Activated CD4-positive, alpha-beta memory T cell treated with anti-CD3 and anti-CD28 coated beads for 36 hours (primary cell): ENCODE measurements at regions of chr3 and their contacts with region 1.

Region 1: GRCh38 chr3:141303481-141304223 is 64.7 kb upstream of the ZBTB38 start:
- DNase-seq: peak; percentile 56
- H3K4me3 Mint-ChIP-seq: no peak overlapping the region
- H3K27ac Mint-ChIP-seq: no peak overlapping the region
- H3K4me1 Mint-ChIP-seq: peaks cover 44% of the 10 kb centered on the region
- H3K27me3 Mint-ChIP-seq: no peaks in the 10 kb centered on the region

Region 2: DNA sequence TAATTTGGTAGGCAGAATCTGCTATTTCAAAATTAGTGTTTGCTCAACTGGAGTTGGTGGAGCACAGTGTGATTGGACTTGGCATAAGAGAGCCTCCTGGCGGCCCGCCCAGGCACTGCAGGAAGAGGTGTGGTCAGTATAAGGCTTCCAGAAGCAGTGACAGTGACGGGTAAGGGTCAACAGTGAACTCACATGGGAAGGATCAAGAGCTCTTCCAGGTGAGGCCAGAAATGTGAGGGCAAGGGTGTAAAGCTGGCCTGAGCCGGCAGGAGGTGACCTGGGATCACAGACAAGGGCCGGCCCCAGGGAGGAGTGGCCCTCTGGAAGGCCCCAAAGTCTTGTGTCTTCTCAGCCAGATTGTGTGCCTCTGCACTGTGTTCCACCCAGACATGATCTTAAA is 341.3 kb after region 1 on chr3:
- CTCF ChIA-PET with region 1: interaction called, 4 read pairs
- POLR2A ChIA-PET with region 1: no interaction called
- intact Hi-C with region 1: loop called (anchors 2 kb)
- DNase-seq: peak; percentile 86
- H3K4me3 Mint-ChIP-seq: no peak overlapping the region
- H3K27ac Mint-ChIP-seq: no peak overlapping the region
- H3K4me1 Mint-ChIP-seq: no peaks in the 10 kb centered on the region
- H3K27me3 Mint-ChIP-seq: no peaks in the 10 kb centered on the region